MCF 10A (cell line): ENCODE measurements at regions of chr5 and their contacts with region 1.

Region 1: DNA sequence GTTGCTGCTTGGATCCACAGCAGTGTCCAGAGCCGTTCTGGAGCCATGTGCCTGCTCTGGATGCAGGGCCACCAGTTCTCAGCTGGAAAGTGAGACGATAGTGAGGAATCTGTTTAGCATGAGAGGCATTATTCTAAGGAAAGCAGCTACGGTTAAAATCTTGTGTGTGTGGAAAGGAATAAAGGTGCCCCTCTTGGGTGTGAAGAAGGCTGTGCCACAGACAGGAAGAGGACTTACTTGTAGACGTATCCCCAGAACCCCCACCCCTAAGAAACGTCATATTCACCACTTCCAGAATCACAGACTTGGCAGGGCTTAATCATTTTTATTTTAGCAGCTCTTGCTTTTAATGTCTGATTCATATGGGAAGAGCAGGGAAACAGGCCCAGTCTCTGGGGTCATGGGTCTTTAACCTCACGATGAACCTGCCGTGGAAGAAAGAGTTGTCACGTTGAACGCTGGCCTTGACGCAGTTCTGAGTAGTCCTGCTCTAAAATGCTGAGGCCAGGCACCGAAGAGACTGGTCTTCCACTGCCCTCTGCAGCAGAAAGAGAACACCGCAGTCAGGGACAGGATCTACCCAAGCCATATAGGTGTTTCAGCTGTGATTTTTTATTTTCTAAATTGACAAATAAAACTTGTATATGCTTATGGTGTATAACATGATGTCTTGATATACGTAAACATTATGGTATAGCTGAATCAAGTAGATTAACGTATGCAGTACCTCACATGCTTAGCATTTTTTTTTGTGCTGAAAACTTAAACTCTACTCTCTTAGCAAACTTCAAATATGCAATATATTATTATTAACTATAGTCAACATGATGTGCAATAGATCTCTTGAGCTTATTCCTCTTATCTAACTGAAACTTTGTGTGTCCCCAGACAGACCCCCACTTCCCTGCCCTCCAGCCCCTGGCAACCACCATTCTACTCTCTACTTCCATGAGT is 38.8 kb downstream of the CARTPT start:
- DNase-seq: peak; percentile 75
- H3K4me3 Mint-ChIP-seq: peak overlapping the region; percentile 12
- H3K27ac Mint-ChIP-seq: no peak overlapping the region
- H3K4me1 Mint-ChIP-seq: peaks cover 6% of the 10 kb centered on the region
- H3K27me3 Mint-ChIP-seq: peaks cover 25% of the 10 kb centered on the region
- CTCF ChIP-seq: peak; percentile 71

Region 2: DNA sequence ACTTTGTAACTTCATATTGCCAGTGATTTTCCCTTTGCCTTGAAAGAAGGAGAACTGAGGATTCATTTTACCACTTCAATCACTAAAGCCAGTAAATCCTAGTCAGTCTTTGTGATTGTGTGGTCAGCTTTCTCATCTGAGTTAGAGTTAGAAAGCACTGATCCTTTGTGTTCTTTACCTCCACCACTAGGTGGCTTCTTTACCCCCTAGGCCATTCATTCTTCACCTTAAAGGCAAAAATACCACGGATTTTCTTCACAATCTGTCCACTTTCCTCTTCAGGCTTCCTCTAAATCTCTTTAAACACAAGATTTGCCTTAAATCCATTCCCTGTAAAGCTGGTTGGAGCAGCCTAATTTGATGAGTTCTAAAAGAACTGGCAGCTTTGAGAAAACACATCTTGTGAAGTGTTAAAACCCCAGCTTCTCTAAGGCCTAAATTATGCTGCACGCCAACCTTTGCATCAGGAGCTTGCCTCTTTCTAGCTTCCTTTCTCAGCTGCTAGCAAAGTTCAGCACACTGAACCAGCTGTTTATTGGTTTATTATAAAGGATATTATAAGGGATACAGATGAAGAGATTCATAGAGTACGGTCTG is 282.0 kb before region 1 on chr5:
- CTCF ChIA-PET with region 1: interaction called, 23 read pairs
- POLR2A ChIA-PET with region 1: no interaction called
- intact Hi-C with region 1: loop called (anchors 1 kb)
- DNase-seq: peak; percentile 39
- H3K4me3 Mint-ChIP-seq: no peak overlapping the region
- H3K27ac Mint-ChIP-seq: no peak overlapping the region
- H3K4me1 Mint-ChIP-seq: no peaks in the 10 kb centered on the region
- H3K27me3 Mint-ChIP-seq: no peaks in the 10 kb centered on the region
- CTCF ChIP-seq: peak; percentile 59

Region 3: GRCh38 chr5:71601222-71602041 is 156.4 kb before region 1 on chr5:
- CTCF ChIA-PET with region 1: no interaction called
- POLR2A ChIA-PET with region 1: no interaction called
- intact Hi-C with region 1: loop called (anchors 5 kb)
- DNase-seq: peak; percentile 98
- H3K4me3 Mint-ChIP-seq: no peak overlapping the region
- H3K27ac Mint-ChIP-seq: peak overlapping the region; percentile 69
- H3K4me1 Mint-ChIP-seq: peaks cover 23% of the 10 kb centered on the region
- H3K27me3 Mint-ChIP-seq: no peaks in the 10 kb centered on the region
- CTCF ChIP-seq: peak; percentile 48

Region 4: DNA sequence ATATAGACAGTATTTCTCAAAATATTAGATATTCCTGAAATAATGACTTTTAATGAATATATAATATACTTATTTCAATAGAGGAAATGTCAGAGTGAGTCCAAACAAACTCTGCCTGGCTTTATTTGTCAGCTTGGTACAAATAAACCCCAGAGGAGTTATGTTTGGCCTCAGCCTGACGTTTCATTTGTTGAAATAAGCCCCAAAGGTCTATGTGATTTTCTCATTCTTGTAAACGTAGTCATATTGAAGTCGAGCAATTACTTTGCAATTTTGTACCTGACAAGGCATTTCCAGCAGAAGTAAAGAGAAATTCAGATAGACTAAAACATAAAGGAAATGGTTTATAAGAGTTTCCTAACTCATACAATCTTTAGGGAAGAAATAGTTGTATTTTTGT is 112.8 kb before region 1 on chr5:
- CTCF ChIA-PET with region 1: no interaction called
- POLR2A ChIA-PET with region 1: no interaction called
- intact Hi-C with region 1: no loop called
- DNase-seq: no peak
- H3K4me3 Mint-ChIP-seq: no peak overlapping the region
- H3K27ac Mint-ChIP-seq: no peak overlapping the region
- H3K4me1 Mint-ChIP-seq: no peaks in the 10 kb centered on the region
- H3K27me3 Mint-ChIP-seq: no peaks in the 10 kb centered on the region
- CTCF ChIP-seq: no peak

Region 5: DNA sequence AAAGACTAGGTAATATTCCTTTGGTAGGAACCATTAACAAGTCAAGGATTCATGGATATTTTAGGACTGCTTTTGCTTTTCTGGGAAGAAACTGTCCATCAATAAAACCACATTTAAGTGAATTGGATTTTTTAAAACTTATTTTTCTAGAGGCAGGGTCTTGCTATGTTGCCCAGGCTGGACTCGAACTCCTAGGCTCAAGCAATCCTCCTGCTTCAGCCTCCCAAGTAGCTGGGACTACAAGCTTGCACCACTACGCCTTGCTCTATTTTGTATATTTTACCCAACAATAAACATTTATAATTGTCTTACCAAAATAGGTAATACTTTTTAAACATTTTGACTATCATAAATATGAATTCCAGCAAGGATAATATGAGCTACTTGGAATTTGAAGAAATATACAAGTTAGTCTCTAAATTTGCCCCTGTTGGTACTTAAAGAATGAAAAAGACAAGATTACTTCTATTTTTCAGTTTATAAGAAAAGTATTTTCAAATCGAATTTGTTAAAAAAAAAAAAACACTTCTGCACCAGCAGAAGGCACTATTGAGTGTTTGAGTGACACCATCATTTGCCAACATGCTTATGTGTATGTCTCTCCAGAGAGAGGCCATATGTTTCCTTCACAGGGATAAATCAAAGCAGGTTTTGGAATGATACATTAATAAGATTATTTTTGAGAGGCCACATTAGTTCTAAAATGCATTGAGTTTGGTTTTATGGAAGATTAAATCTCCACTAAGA is 98.8 kb before region 1 on chr5:
- CTCF ChIA-PET with region 1: interaction called, 3 read pairs
- POLR2A ChIA-PET with region 1: no interaction called
- intact Hi-C with region 1: loop called (anchors 1 kb)
- DNase-seq: peak; percentile 14
- H3K4me3 Mint-ChIP-seq: no peak overlapping the region
- H3K27ac Mint-ChIP-seq: no peak overlapping the region
- H3K4me1 Mint-ChIP-seq: no peaks in the 10 kb centered on the region
- H3K27me3 Mint-ChIP-seq: no peaks in the 10 kb centered on the region
- CTCF ChIP-seq: peak; percentile 16

Region 6: GRCh38 chr5:71666321-71666720 is 91.5 kb before region 1 on chr5:
- CTCF ChIA-PET with region 1: interaction called, 4 read pairs
- POLR2A ChIA-PET with region 1: no interaction called
- intact Hi-C with region 1: loop called (anchors 5 kb)
- DNase-seq: no peak
- H3K4me3 Mint-ChIP-seq: no peak overlapping the region
- H3K27ac Mint-ChIP-seq: no peak overlapping the region
- H3K4me1 Mint-ChIP-seq: no peaks in the 10 kb centered on the region
- H3K27me3 Mint-ChIP-seq: peaks cover 20% of the 10 kb centered on the region
- CTCF ChIP-seq: no peak